ENCODE measurements at regions of chr2 and their contacts with region 1.

Region 1: DNA sequence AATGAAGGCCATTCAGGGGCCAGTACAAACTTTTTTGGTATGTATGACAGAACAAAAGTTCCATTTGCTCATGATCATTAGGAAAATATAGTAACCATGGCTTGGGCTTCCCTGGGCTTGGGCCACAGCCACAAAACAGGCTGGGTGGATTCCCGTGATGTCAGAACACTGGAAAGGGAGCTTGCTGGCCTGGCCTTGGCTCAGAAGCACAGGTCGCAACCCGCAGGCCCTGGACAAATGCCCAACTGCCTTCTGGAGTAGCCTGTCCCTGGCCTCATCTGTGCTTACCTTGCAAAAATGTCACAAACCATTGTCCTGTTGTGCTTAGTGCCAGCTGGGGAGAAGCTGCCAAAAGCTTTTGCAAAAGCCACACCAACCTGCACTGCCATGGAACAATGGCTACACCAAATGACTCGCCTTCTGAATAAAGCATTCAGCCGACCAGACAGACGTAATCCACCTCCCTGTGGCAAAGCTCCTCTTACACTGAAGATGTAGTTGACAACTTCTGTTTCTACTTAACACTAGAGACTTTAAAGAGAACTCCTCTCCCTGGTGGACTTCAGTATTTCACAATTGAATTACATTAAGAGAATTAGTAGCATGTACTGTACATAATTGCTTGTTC is 125.5 kb downstream of the ANKRD44 start:
- DNase-seq: no peak
- H3K4me3 ChIP-seq: no peak overlapping the region
- H3K27ac ChIP-seq: peak overlapping the region in 1 of 2 experiments; percentile 90; a peak in 2 of 4 replicates
- H3K4me1 ChIP-seq: peaks cover 6 to 40% of the 10 kb centered on the region in 2 experiments; a peak in 2 of 4 replicates
- H3K27me3 ChIP-seq: no peaks in the 10 kb centered on the region
- CTCF ChIP-seq: no peak
- EP300 ChIP-seq: no peak; a peak in 1 of 4 replicates
- RAD21 ChIP-seq: no peak; the same call in 1 of the 2 replicates

Region 2: DNA sequence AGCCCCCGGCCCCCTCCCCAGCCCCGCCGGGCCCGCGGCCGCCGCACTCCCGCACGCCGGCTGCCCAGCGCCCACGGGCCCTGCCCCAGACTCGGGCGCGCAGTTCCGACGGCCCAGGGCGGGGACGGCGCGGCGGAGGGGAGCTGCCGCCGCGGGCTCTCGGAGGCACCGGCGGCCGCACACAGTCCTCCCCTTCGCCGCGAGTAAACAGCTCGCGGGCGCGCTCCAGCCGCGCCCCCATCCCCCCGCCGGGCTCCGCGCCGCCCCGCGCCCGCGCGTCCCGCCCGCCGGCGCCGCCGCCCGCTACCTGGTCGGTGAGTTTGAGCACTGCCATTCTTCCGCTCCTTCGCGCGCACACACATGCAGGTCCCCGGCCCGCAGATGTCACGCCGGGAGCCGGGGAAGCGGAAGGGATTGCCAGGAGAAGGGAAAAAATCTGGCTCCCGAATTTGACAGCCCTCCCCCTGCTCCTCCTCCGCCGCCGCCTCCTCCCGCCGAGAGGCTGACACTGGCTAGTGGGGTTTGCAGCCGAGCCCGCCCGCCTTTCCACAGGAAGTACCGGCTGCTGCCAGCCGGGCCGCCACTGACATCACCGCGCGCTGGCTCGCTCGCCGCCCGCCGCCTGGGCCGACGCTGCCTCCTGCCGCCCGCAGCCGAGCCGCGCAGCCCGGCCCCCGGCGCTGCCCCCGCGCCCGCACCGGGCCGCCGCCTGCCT is 125.4 kb after region 1 on chr2 and contains the start of gene ANKRD44:
- CTCF ChIA-PET with region 1: interaction called, 55 read pairs
- POLR2A ChIA-PET with region 1: interaction called, 3 read pairs
- DNase-seq: peak; percentile 95
- H3K4me3 ChIP-seq: peak within 1 kb of the TSS; percentile 70 to 73
- H3K27ac ChIP-seq: peak within 1 kb of the TSS in 1 of 2 experiments; percentile 94; a peak in 2 of 4 replicates
- H3K4me1 ChIP-seq: peaks cover 7 to 36% of the 10 kb centered on the region in 2 experiments; a peak in 3 of 4 replicates
- H3K27me3 ChIP-seq: no peaks in the 10 kb centered on the region
- CTCF ChIP-seq: peak; percentile 34
- EP300 ChIP-seq: no peak
- RAD21 ChIP-seq: peak; percentile 66
- polyA plus RNA-seq, gene ANKRD44: 12.3 and 12.5 TPM in 2 replicates